Ovary (tissue), 10 donors: ENCODE measurements at regions of chr7 and their contacts with region 1.

Region 1: DNA sequence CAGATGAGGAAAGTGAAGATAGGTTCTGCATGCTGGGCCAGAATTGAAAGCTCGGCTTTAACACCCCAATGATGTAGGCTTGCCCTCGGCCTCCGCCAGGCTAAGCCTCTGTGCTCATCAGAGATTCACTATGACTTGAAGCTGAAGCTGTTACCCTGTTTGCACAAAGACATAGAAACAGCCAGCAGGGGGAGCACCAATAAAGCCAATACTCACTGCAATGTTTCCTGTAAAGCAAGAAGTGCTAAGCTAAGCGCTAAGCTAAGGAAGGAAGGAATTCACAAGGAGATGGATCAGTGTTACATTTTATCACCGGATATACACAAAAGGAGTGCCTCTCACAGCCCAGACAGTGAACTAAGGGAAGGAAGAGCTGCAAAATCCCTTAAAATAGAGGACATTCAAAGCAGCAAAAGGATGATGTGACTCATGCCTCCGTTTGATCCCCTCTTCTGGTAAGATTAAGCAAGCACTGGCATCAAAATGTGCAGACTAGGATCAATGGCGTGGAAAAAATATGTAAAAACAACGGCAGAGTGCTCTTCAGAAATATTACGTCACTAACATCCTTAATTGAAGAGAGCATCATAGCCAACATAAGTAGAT is 153.8 kb downstream of the COBL start:
- DNase-seq: peak; percentile 53 to 76 (median 62)
- H3K4me3 ChIP-seq: no peak overlapping the region
- H3K27ac ChIP-seq: no peak overlapping the region
- H3K4me1 ChIP-seq: no peaks in the 10 kb centered on the region
- H3K27me3 ChIP-seq: no peaks in the 10 kb centered on the region
- CTCF ChIP-seq: peak; percentile 47 to 69 (median 53)
- EP300 ChIP-seq: no peak
- POLR2A ChIP-seq: no peak

Region 2: DNA sequence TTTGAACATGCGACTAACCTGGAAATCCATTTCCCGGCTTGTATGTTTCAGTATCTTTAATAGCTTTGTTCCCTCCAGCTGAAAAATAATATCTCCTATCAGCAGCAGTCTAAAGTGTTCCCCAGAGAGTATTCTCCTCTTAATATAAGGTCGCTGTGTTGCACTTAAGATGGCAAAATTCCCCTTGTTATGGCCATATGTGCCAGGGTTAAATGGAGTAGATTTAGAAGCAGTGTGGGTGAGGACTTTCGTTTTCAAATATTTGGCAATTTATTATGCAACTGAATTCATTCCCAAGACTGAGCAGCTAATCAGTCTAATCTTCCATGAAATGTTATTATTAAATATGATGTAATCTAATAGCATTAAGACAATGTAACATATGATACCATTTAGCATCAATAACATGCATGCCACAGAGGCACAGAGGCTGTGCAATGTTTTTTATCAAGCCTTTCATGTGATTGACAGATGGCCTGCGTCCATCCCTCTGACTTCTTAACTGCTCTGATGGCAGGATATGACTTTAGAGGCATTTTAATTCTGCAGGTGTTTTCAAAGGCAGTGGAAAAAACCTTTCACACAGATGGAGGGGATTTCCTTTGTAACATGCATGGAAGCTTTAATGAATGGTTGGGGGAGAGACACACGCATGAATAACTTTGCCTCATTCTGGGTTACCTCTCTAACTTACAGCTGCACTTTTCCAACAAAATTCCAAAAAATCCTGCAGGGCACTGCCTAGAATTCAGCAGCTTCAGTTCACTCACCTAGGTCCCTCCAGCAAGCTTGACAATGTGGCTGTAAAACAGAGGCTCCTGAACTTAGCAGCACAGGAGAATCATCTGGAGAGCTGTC is 1014.6 kb before region 1 on chr7:
- intact Hi-C with region 1: loop called in 2 of 4 experiments (anchors 5 to 10 kb)
- DNase-seq: no peak
- H3K4me3 ChIP-seq: no peak overlapping the region
- H3K27ac ChIP-seq: no peak overlapping the region
- H3K4me1 ChIP-seq: no peaks in the 10 kb centered on the region
- H3K27me3 ChIP-seq: no peaks in the 10 kb centered on the region
- CTCF ChIP-seq: no peak
- EP300 ChIP-seq: no peak
- POLR2A ChIP-seq: no peak

Region 3: DNA sequence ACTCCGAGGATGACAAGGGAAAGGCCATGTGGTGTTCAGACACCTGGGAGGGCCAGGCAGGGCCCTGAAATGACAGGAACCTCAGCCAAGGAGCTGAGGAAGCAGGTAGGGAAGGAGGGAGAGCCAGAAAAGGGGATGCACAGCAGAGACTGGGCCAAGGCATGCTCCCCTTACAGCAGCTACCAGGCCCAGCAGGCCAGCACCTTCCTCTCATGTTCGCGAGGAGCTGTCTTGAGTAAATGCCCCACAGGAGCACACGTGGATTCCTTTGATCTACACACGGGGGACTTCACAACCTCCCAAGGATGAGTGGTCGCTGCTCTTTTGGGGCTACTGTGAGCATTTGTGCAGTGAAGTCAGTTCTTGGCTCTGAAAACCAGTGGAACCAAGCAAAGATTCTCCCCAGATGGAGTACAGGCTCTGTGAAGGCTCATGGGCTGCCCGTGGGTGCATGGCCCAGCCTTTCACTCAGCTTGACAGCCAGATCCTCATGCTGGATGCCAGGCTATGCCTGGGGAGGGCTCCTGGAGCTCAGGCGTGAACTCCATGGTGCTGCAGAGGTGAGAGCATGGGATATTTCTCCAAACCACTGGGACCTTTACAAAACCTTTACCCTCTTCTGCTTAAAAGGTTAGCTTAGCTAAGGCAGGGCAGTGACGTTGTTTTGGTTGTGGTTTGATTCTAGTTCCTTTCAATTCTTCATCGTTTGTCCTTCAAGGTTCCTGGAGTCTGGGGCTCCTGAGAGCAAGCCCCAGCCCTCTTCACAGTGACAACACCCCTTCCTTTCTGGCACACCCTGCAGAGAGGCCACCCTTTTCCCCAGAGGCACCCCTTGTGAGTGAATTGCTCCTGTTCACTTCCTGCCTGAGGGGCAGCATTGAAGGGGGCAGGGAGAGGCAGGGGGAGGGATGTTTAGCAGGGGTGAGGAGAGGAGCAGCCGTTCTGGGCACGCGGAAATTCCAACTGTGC is 995.5 kb before region 1 on chr7:
- intact Hi-C with region 1: no loop called
- DNase-seq: no peak
- H3K4me3 ChIP-seq: no peak overlapping the region
- H3K27ac ChIP-seq: no peak overlapping the region
- H3K4me1 ChIP-seq: no peaks in the 10 kb centered on the region
- H3K27me3 ChIP-seq: no peaks in the 10 kb centered on the region
- CTCF ChIP-seq: no peak
- EP300 ChIP-seq: no peak
- POLR2A ChIP-seq: no peak

Region 4: DNA sequence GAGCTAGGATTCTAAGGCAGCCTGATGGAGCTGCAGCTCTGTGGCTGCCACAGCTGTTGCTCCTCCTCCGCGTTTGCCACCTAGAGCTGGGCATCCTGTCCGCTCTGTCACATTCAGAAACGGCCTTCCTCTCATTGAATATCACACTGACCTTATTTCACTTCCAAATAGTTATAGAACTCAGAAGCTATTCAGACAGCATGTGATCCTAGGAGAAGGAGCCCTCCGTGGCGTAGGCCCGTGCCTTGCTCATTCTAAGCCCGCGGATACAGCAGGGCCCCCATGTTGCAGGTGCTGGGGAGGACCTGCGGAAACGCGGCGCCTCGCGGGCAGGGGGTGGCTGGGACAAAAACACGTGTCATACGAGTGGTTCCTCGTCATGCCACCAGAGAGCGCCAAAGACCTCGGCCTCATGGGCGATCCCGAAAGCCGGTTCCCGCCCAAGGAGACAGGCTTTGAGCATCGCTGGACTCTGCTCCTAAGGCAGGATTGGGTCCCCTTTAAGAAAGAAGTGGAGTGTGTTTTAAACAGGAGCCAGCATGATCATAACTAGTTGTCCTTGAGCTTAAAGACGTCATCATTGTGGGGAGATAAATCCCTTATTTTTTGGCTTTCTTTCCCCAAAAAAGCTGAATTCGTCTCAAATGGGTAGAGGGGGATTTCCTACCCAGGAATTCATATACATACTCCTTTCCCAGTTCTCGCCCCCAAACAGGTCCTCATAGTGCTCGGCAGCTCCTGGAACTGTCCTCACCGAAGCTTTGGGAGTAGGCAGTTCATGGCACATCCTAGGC is 694.8 kb before region 1 on chr7:
- intact Hi-C with region 1: loop called in 3 of 4 experiments (anchors 5 kb)
- DNase-seq: peak; percentile 78 to 94 (median 88)
- H3K4me3 ChIP-seq: no peak overlapping the region
- H3K27ac ChIP-seq: no peak overlapping the region
- H3K4me1 ChIP-seq: no peaks in the 10 kb centered on the region
- H3K27me3 ChIP-seq: no peaks in the 10 kb centered on the region
- CTCF ChIP-seq: peak; percentile 81 to 95 (median 92)
- EP300 ChIP-seq: no peak
- POLR2A ChIP-seq: no peak

Region 5: DNA sequence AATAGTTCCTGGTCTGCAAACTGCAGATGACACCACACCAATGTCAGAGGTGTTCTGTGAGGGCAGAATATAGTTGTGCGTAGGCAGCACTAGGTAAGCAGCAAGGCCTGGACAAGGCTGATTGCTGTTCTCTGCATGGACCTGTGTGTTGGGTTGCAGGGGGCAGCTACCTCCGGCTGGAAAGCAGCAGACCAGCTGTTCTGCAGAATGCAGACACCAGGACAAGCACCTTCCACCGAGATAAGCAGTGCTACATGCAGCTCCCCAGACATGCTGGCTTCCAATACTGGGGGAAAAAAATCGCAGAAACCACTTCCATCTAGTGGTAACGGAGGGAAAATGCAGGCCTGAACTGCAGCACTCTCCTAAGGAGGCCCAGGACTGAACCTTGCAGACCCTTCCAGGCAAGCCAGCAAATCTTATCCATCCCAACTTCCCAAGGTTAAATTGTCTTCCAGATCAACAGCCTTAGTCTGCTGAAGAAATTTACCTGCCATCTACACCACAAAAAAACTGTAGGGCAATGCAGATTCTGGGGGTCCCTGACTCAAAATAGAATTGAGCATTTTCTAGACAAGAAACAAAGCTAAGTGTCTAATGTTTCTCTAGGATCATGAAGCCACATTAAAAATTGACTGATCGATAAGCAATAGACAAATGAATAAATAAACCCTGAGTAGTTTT is 204.2 kb after region 1 on chr7:
- intact Hi-C with region 1: loop called in 3 of 4 experiments (anchors 5 to 10 kb)
- DNase-seq: peak in 2 of 5 donors; percentile 15 to 26
- H3K4me3 ChIP-seq: no peak overlapping the region
- H3K27ac ChIP-seq: no peak overlapping the region
- H3K4me1 ChIP-seq: no peaks in the 10 kb centered on the region
- H3K27me3 ChIP-seq: no peaks in the 10 kb centered on the region
- CTCF ChIP-seq: peak in 2 of 3 donors; percentile 40 to 53
- EP300 ChIP-seq: no peak
- POLR2A ChIP-seq: no peak